Posterior vena cava (tissue), 2 donors: ENCODE measurements at regions of chr15 and their contacts with region 1.

Region 1: DNA sequence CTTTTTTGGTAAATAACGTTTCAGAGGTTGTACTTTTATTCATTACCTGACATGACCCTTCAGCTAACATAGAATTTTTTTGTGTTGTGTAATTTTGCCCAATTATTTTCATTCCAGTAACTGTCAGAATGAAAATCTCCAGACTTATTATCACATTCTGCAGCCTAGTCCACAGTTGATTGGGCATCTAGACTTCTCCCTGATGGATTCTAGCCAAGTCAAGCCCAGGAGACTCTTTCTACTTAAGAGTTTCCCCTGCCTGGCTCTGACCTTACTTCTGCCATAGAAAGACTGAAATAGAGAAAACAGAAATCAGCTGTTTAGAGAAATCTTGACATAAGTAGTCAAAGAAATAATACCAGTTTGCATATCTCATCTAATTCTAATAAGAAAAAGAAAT is 82.9 kb upstream of the CDAN1 start:
- DNase-seq: no peak

Region 2: DNA sequence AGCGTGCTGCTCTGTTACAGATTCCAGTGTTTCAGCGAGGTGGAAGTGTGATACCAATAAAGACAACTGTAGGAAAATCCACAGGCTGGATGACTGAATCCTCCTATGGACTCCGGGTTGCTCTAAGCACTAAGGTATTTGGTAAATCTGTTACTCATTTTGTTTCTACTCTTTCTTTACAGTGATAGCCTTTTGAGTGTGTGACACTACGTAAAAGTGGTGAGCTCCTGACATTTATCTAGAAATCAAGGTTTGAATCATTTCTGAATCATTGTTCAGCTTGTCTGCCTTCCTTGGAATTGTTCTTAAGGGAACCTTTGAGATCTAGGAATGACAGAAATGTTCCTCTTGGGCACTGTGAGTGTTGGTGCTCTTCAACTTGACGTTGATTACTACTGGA is 471.7 kb before region 1 on chr15:
- intact Hi-C with region 1: no loop called
- DNase-seq: no peak

Region 3: DNA sequence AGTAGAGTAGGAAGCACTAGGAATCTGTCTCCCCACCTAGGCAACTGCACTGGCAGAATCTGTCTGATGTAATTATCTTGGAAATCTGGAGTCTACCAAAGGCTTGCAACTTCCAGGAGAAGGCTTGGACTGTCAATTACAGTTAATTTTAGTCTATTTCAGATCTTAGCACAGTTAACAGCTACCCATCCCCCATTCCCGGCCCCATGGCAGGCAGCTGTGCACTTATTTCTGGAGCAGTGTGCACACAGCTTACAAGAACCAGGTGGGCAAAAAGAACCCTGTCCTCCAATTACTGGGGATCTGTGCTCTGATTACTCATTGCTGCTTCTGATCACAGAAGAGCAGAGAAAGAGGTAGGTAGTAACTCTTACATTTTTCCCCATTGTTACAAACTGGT is 70.5 kb before region 1 on chr15:
- intact Hi-C with region 1: no loop called
- DNase-seq: no peak

Region 4: DNA sequence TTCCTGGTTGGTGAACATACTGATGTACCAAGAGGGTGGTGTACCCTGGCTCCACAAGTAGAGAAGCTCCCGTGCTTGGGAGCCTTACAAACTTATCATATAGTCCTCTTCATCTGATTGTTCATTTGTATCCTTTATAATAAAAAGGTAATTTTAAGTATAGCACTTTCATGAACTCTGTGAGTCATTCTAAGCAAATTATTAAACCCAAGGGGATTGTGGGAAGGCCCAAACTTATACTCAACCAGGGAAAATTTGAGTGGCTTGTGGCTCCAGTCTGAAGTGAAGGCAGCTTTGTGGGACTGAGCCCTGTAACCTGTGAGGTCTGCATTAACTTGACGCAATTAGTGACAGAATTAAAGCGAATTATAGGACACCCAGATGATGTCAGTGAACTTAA is 71.8 kb after region 1 on chr15:
- intact Hi-C with region 1: loop called in 1 of 2 experiments (anchors 2 kb)
- DNase-seq: no peak